ENCODE measurements at regions of chr6 and their contacts with region 1.

Region 1: DNA sequence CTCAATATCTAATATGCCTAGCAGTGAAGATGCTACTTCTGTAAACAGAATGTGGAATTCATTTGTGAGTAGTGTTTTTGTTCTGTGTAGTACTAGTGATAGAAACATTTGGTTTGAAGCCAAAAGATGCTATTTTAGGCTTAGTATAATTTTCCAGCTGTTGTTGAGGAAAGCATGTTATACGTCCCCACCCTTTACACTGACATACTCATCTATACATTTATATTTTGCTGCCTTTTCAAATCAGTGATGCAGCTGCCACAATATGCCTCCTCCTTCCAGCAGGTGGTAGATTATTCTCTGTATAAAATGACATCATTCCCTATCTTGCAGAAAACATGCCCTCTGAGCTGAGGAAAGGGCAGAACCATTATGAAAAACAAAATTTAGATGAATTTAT is 1217.6 kb upstream of the GJE1 start:
- DNase-seq: no peak
- ATAC-seq: no peak
- H3K4me3 ChIP-seq: no peak overlapping the region
- H3K27ac ChIP-seq: no peak overlapping the region
- H3K4me1 ChIP-seq: no peaks in the 10 kb centered on the region
- H3K27me3 ChIP-seq: no peaks in the 10 kb centered on the region
- CTCF ChIP-seq: no peak

Region 2: DNA sequence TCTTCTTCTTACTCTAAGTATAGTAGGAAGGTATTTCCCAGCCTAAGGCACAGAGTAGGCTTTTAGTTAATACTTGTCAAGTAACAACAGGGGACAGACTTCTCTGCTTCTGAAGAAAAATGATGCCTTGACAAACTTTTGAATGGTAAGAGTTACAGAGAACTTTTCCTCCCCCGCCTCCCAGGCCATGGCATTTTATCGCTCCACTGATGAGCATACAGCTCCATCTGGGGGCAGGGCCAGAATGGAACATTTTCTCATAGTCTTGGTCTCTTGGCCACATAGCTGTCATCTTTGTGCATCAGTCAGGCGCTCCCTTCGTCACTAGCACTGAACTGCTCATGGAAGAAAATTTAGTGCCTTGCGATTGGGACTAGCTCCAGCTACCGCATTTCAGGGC is 473.8 kb before region 1 on chr6:
- CTCF ChIA-PET with region 1: no interaction called
- POLR2A ChIA-PET with region 1: no interaction called
- intact Hi-C with region 1: loop called (anchors 10 kb)
- DNase-seq: peak; percentile 58
- ATAC-seq: peak; percentile 42; the same call in 1 of the 2 replicates
- H3K4me3 ChIP-seq: no peak overlapping the region
- H3K27ac ChIP-seq: no peak overlapping the region
- H3K4me1 ChIP-seq: peaks cover 9% of the 10 kb centered on the region
- H3K27me3 ChIP-seq: no peaks in the 10 kb centered on the region
- CTCF ChIP-seq: peak; percentile 59; the same call in 1 of the 2 replicates

Region 3: DNA sequence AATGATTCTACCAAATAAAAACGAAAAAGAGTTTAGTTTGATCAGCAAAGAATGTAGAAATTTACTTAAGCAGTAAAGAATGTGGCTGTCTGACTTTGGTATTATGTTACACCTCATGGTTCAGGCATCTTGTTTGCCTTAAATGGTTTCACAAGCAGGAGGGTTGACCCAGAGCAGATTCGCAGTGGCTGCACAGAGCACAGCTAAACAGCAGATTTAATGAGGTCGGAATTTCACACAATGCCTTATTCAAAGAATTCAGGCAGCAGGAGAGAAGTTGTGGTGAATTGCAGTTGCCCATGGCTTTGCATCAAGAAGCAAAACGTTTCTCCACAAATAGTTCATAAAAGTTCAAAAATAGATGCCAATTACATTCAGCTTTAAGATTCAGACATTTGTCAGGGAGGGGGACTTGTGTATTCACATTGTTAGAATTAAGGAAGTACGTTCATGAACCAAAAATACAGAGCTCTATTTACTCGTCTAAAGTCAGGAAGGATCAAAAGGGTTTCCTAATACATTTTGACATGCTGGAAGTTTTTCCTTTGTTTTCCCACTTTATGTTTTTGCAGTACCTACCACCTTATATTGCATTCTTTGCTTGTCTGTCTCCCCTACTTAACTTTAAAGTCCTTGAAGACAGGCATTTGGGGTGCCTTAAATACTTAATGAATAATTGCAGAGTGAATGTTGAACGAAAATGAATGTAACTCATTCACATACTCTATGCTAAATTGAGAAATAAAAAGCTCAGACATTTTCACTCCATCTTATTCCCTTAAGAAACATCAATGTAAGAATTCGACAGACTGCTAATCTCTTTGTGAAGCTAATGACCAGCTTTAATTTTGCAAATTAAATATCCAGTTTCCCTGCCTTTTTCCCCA is 377.0 kb before region 1 on chr6:
- CTCF ChIA-PET with region 1: no interaction called
- POLR2A ChIA-PET with region 1: no interaction called
- intact Hi-C with region 1: no loop called
- DNase-seq: peak; percentile 77
- ATAC-seq: peak; percentile 100
- H3K4me3 ChIP-seq: peak overlapping the region; percentile 49
- H3K27ac ChIP-seq: peak overlapping the region; percentile 68
- H3K4me1 ChIP-seq: peaks cover 23% of the 10 kb centered on the region
- H3K27me3 ChIP-seq: no peaks in the 10 kb centered on the region
- CTCF ChIP-seq: no peak

Measured in PC-3 (cell line).